Tibial artery (tissue), 4 donors: ENCODE measurements at regions of chr5 and their contacts with region 1.

Region 1: GRCh38 chr5:39547553-39548154 is 122.9 kb upstream of the DAB2 start:
- DNase-seq: no peak
- H3K4me3 ChIP-seq: no peak overlapping the region
- H3K27ac ChIP-seq: no peak overlapping the region
- H3K4me1 ChIP-seq: peaks cover 0 to 7% (median 1%) of the 10 kb centered on the region in 4 donors
- H3K27me3 ChIP-seq: no peaks in the 10 kb centered on the region
- CTCF ChIP-seq: peak; percentile 70 to 80

Region 2: GRCh38 chr5:39055768-39056394 is 491.8 kb before region 1 on chr5:
- intact Hi-C with region 1: no loop called
- DNase-seq: no peak
- H3K4me3 ChIP-seq: no peak overlapping the region
- H3K27ac ChIP-seq: no peak overlapping the region
- H3K4me1 ChIP-seq: peaks cover 0 to 30% (median 10%) of the 10 kb centered on the region in 4 donors
- H3K27me3 ChIP-seq: no peaks in the 10 kb centered on the region
- CTCF ChIP-seq: no peak

Region 3: DNA sequence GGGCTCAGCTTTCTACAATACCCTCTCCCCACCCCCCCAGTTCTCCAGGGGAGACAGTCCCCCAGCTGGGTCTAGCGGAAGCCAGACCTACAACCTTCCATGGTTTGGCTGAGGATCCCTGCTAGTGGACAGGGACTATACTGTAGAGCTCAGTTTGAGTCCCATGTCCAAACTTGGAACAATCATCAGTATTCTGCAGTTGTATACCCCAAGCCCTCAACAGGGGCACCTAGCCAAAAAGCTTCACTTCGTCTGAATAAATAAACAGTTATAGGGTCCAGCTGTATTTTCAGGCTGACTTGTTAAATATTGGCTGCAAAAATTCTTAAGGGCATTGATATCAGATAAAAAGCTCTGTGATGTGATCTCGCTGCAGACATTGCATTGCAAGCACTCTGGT is 168.0 kb before region 1 on chr5:
- intact Hi-C with region 1: loop called (anchors 2 kb)
- DNase-seq: no peak
- H3K4me3 ChIP-seq: no peak overlapping the region
- H3K27ac ChIP-seq: no peak overlapping the region
- H3K4me1 ChIP-seq: no peaks in the 10 kb centered on the region
- H3K27me3 ChIP-seq: no peaks in the 10 kb centered on the region
- CTCF ChIP-seq: no peak